Activated T-helper 1 cell treated with anti-CD3 and anti-CD28 coated beads, Interleukin-12 subunit alpha, Interleukin-12 subunit beta, Interleukin-2, Interleukin-4 antibody, amounts not matched to agents 30 ng/mL and 10 ng/mL and 1 ng/mL, durations not matched to agents 14 hours and 24 hours and 36 hours (primary cell): ENCODE measurements at regions of chr17 and their contacts with region 1.

Region 1: DNA sequence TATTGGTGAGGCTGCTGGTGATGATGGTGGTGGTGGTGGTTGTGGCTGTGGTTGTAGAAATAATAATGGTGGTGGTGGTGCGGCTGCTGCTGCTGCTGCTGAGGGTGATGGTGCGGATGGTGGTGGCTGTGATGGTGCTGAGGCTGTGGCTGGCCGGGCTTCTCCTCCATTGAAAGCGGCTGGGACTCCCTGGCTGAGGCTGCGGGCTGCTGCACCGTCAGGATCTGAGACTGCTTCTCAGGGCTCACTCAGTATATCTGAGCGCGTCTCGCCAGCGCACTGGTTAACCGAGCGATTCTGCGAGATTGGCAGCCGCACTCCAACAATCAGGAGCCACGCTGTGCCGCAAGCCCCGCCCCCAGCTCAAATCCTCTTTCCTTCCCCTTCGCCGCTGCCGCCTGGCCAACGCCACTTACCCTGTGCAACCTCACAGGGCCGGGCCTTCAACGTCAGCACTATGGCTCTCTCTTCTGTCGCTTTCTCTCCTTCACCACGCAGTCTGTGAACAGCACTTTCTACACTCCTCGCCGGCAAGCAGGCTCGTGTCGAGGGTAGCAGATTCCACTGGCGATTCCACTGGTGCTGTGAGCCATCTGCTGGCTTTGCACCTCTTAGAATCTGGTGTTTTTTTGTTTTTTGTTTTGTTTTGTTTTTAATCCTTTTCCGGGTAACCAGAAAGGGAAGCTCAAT is at the start of gene NUFIP2:
- DNase-seq: peak; percentile 97
- H3K4me3 Mint-ChIP-seq: peak within 1 kb of the TSS; percentile 100
- H3K27ac Mint-ChIP-seq: peak within 1 kb of the TSS; percentile 99
- H3K4me1 Mint-ChIP-seq: peaks cover 43% of the 10 kb centered on the region
- H3K27me3 Mint-ChIP-seq: peaks cover 3% of the 10 kb centered on the region
- total RNA-seq, gene NUFIP2: 92.2 and 95.5 TPM in 2 replicates

Region 2: DNA sequence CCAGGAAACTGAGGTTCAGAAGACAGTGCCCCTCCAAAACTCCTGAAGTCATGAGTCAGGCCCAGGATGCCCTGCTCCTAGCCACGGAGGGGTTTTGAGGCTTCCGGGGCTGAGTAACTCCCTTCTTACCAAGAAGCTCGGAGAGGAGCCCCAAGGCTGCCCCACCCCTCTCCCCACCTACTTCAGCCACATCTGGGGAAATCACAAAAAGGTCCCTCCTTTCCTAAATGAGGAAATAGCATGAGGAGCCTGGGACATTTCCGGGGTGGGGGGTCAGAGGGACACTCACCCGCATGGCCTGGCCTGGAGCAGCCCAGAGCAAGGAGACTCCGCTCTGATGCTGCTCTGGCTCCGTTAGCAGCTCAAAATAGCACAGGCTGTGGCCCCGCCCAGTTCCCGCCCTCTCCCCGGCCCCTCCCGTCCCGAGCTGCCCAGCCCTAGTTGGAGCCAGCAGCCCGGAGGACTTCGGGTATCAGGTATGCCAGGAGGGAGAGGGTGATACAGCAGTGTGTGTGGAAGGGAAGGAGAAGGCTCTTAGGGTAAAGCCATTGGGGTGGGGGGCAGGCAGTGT is 153.9 kb before region 1 on chr17:
- intact Hi-C with region 1: loop called (anchors 1 kb)
- DNase-seq: peak; percentile 82
- H3K4me3 Mint-ChIP-seq: peak overlapping the region; percentile 96
- H3K27ac Mint-ChIP-seq: peak overlapping the region; percentile 100
- H3K4me1 Mint-ChIP-seq: peaks cover 80% of the 10 kb centered on the region
- H3K27me3 Mint-ChIP-seq: no peaks in the 10 kb centered on the region

Region 3: DNA sequence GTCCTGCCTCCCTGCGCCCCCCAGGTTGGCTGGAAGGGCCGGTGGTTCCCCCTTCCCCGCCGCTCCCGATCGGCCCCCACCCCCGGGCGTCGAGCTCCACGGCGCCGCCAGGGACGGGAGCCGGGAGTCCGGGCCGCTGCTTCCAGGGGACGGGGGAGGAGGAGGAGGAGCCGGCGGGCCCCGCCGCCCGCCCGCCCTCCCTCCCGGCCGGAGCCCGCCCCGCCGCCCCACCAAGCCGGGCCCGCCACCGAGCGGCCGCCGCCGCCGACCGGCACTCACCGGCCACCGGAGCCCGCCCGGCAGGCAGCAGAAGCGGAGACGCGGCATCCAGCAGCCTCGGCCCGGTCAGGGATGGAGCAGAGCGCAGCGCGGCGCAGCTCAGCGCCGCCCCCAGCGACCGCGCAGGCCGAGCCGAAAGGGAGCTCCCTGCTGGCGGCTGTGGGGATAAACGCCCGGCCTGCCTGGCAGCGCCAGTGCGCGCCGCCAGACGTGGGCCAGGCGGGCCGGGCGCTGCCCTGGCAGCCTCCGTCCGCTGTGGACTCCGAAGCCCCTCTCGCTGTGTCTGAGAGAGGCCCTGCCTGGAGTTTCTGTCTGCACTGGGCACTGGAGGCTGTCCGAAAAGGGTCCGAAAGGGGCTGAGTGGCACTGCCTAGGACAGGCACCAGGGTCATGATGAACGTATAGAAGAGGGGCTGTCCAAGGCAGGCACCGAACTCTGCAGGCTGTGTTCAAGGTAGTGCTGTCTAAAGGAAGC is 113.8 kb before region 1 on chr17 and contains the start of gene MYO18A:
- intact Hi-C with region 1: loop called (anchors 1 kb)
- DNase-seq: peak; percentile 75
- H3K4me3 Mint-ChIP-seq: peak within 1 kb of the TSS; percentile 68
- H3K27ac Mint-ChIP-seq: peak within 1 kb of the TSS; percentile 18
- H3K4me1 Mint-ChIP-seq: peaks cover 36% of the 10 kb centered on the region
- H3K27me3 Mint-ChIP-seq: peaks cover 6% of the 10 kb centered on the region
- total RNA-seq, gene MYO18A: 38.2 and 40.5 TPM in 2 replicates

Region 4: DNA sequence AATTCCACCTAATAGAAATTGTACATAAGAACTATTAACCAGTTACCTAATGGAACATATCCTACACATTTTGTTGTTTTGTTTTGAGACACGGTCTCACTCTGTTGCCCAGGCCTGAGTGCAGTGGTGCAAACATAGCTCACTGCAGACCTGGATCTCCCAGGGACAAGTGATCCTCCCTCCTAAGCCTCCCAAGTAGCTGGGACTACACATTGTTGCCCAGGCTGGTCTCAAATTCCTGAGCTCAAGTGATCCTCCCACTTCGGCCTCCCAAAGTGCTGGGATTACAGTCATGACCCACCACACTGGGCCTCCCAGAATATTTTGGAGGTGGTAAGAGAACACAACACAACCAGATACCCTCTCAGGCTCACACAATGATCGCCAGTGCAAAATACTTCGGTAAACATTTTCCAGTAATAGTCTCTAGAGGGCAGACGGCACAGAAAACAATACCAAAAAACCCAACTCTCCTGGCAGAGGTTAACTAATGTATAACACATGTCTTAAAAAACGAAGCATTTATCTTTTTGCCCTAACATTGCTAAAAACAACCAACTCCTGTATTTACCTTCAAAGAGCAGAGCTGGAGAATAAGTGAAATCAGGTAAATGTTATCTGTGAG is 10.7 kb before region 1 on chr17:
- intact Hi-C with region 1: no loop called
- DNase-seq: no peak
- H3K4me3 Mint-ChIP-seq: peak overlapping the region; percentile 12
- H3K27ac Mint-ChIP-seq: no peak overlapping the region
- H3K4me1 Mint-ChIP-seq: peaks cover 45% of the 10 kb centered on the region
- H3K27me3 Mint-ChIP-seq: no peaks in the 10 kb centered on the region

Region 5: DNA sequence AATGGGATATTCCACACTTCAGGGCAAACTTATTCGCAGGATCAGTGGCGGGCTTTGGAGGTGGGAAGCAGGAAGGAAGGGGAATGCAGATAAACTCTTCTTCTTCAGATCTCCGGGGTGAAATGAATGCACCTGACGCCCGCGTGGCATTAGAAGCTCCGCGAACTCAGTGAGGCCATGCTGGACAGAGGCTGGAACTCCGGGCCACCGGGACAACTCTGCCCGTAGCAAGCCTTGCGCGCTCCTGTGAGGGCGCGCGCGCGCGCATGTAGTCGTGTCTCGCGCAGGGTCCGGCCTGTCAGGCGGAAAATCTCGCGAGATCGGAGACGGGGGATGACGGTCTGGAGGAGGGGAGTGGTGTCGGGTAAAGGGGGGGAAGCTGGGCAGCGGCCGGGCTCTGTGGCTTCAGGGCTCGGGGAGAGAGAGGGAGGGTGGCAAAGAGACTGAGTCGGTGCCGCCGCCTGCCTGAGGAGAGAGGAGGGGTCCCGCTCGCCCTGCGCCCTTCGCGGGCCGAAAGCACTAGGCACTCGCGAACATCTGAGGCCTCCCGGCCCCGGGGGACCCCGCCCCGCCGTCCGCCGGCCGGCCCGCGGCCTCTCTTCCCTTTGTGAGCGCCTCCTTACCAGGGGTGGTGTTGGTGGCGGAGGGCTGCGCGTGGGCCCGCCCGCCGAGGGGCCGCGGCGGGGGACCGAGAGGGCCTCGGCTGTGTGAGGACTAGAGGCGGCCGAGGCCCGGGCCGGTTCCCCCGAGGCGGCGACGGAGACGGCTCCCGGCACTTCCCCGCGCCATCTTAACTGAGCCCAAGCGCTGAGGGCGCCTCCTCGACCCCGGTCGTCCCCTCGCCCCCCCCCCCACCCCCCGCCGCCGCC is 96.2 kb after region 1 on chr17 and contains the start of gene TAOK1:
- intact Hi-C with region 1: loop called (anchors 1 kb)
- DNase-seq: peak; percentile 97
- H3K4me3 Mint-ChIP-seq: peak within 1 kb of the TSS; percentile 98
- H3K27ac Mint-ChIP-seq: peak within 1 kb of the TSS; percentile 95
- H3K4me1 Mint-ChIP-seq: peaks cover 43% of the 10 kb centered on the region
- H3K27me3 Mint-ChIP-seq: no peaks in the 10 kb centered on the region
- total RNA-seq, gene TAOK1: 45.9 and 46.9 TPM in 2 replicates

Region 6: DNA sequence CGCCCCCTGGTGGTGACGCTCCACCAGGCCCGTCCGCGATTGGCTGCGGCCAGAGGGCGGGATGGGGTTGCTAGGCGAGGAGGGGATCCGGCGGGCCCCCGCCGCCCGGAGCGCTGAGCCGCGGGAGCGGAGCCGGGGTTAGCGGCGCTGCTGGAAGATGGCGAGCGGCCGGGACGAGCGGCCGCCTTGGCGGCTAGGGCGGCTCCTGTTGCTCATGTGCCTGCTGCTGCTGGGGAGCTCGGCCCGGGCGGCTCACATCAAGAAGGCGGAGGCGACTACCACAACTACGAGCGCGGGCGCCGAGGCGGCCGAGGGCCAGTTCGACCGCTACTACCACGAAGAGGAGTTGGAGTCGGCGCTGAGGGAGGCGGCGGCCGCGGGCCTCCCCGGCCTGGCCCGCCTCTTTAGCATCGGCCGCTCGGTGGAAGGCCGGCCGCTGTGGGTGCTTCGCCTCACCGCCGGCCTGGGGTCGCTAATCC is 1084.8 kb after region 1 on chr17 and contains the start of gene CPD:
- intact Hi-C with region 1: loop called (anchors 10 kb)
- DNase-seq: peak; percentile 97
- H3K4me3 Mint-ChIP-seq: peak within 1 kb of the TSS; percentile 92
- H3K27ac Mint-ChIP-seq: peak within 1 kb of the TSS; percentile 97
- H3K4me1 Mint-ChIP-seq: peaks cover 67% of the 10 kb centered on the region
- H3K27me3 Mint-ChIP-seq: no peaks in the 10 kb centered on the region
- total RNA-seq, gene CPD: 29.7 and 35.3 TPM in 2 replicates